CD8-positive, alpha-beta memory T cell (primary cell): ENCODE measurements at regions of chr7 and their contacts with region 1.

Region 1: GRCh38 chr7:134632937-134633540 is 13.6 kb upstream of the BPGM start:
- DNase-seq: peak in 4 of 5 donors; percentile 8 to 63 (median 51)
- H3K4me3 ChIP-seq: no peak overlapping the region
- H3K4me3 Mint-ChIP-seq: no peak overlapping the region
- H3K27ac ChIP-seq: no peak overlapping the region
- H3K27ac Mint-ChIP-seq: no peak overlapping the region
- H3K4me1 ChIP-seq: peaks cover 8% of the 10 kb centered on the region
- H3K4me1 Mint-ChIP-seq: peaks cover 11 to 21% (median 19%) of the 10 kb centered on the region in 3 donors
- H3K27me3 ChIP-seq: no peaks in the 10 kb centered on the region
- H3K27me3 Mint-ChIP-seq: peaks cover 13 to 32% of the 10 kb centered on the region in 2 donors

Region 2: DNA sequence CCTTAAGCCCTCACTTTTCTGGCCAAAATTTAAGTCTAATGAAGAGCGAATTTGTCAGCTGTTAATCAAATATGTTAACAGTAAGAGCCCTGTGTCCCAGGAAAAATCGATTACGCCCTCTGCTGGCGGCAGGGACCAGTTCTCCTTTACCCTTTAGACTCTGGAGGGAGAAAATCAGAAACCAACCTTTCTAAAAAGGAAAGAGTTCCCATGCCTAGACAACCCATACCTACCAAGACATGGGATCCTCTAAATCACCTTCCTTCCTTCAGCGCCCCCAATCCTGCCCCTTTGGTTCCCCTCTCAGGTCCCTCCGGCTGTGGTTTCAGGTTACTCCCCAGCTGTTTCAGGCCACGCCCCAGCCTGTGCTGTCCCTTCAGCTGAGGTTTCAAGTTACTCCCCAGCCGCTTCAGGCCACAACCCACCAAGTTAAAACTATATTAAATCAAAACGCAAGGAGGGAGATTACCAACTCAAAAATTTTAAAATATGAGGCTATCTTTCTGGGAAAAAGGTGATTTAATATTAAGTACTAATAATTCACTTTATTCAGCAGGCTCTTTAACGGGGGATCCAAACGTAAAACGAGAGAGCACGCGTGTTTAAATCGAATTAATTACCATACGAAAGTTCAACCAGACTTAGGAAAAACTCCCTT is 85.5 kb before region 1 on chr7:
- CTCF ChIA-PET with region 1: no interaction called
- POLR2A ChIA-PET with region 1: no interaction called
- DNase-seq: peak; percentile 34 to 73 (median 44)
- H3K4me3 ChIP-seq: no peak overlapping the region
- H3K4me3 Mint-ChIP-seq: peak overlapping the region in 2 of 7 donors; percentile 24 to 40
- H3K27ac ChIP-seq: no peak overlapping the region
- H3K27ac Mint-ChIP-seq: no peak overlapping the region
- H3K4me1 ChIP-seq: no peaks in the 10 kb centered on the region
- H3K4me1 Mint-ChIP-seq: peaks cover 0 to 3% (median 0%) of the 10 kb centered on the region in 3 donors
- H3K27me3 ChIP-seq: no peaks in the 10 kb centered on the region
- H3K27me3 Mint-ChIP-seq: peaks cover 24 to 26% of the 10 kb centered on the region in 2 donors

Region 3: GRCh38 chr7:134701272-134701671 is 68.2 kb after region 1 on chr7:
- CTCF ChIA-PET with region 1: interaction called, 81 read pairs
- POLR2A ChIA-PET with region 1: no interaction called
- DNase-seq: peak in 3 of 5 donors; percentile 13 to 51 (median 42)
- H3K4me3 ChIP-seq: no peak overlapping the region
- H3K4me3 Mint-ChIP-seq: no peak overlapping the region
- H3K27ac ChIP-seq: no peak overlapping the region
- H3K27ac Mint-ChIP-seq: peak overlapping the region in 2 of 8 donors; percentile 8 to 61
- H3K4me1 ChIP-seq: no peaks in the 10 kb centered on the region
- H3K4me1 Mint-ChIP-seq: no peaks in the 10 kb centered on the region
- H3K27me3 ChIP-seq: no peaks in the 10 kb centered on the region
- H3K27me3 Mint-ChIP-seq: peaks cover 0 to 16% of the 10 kb centered on the region in 2 donors

Region 4: DNA sequence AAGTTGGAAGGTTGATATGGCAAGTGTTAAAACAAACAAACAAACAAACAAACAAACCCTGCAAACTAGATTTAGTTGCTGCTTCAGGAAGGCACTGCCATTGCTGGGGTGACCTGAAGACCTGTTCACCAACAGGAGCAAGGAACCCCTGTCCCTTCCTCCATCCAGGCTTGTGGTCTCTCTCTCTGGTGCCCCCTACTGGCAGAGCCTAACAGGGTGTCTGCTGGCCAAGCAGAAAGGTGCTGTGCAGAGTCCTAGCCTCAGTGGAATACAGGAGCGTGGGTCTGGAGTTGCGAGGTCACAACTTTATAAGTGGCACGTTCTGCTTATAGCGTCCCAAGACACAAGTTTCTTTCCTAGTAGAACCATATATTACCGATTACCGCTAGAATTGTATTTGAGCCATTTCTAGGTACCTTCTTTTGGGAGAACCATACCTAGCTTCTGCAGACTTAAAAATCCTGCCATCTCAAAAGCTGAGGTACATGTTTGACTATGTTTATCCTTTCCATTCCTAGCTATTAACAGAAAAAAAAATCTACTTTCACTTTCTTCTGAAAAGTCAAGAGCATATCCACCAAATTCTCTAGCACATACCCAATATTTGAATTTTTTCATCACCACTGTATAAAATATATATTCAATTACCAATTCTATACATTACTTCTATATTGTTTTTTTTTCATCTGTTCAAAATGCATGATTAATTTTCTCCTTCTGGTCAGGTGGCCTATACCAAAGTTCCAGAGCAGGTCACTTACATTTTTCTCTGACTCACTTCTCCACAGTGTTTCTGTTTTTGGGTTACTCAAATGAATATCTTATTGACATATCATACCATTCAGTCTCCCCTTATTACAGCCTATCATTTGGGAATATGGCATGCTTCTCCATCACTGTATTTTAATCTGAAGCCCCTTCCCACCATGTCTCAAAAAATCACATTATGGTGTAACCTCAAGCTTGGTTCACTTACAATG is 117.3 kb after region 1 on chr7:
- CTCF ChIA-PET with region 1: interaction called, 52 read pairs
- POLR2A ChIA-PET with region 1: no interaction called
- DNase-seq: peak; percentile 33 to 75 (median 52)
- H3K4me3 ChIP-seq: no peak overlapping the region
- H3K4me3 Mint-ChIP-seq: no peak overlapping the region
- H3K27ac ChIP-seq: no peak overlapping the region
- H3K27ac Mint-ChIP-seq: no peak overlapping the region
- H3K4me1 ChIP-seq: no peaks in the 10 kb centered on the region
- H3K4me1 Mint-ChIP-seq: no peaks in the 10 kb centered on the region
- H3K27me3 ChIP-seq: no peaks in the 10 kb centered on the region
- H3K27me3 Mint-ChIP-seq: peaks cover 5 to 11% of the 10 kb centered on the region in 2 donors

Region 5: DNA sequence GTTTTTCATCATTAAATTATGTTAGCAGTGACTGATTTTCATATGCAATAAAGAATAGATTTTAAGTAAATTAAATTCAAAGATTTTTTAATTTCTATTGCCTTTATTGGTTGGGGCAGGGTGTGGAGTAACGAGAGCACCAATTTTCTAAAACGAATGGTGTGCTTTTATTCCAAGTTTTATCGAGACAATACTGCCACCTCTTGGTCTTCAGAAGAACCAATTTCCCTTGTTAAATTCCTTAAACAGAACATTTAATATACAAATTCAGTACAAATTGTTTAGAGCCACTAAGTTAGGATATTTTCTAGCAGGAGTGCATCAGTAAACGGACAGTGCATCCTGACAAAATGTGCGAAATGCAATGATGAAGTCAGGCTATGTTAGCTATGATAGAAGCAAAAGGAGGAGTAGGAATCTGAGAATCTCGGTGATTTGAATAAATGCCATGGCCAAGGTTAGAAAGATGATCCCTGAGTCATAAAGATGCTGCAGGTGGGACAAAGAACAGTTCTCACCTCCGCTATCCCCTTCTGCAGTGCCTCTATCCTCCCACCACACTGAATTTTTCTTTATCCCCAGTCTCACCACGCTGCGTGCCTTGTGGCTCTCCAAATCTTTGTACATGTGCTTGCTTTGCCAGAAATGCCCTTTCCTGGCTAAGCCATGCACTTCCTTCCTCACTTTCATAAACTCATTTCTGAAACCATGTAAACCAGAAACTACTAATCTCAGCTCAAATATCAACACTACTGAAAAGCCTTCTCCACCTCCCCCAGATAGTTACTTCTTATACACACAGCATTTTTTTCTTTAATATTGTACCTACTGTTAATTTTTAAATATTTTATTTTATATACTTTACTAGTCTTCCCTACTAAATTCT is 321.4 kb after region 1 on chr7:
- CTCF ChIA-PET with region 1: interaction called, 22 read pairs
- POLR2A ChIA-PET with region 1: no interaction called
- DNase-seq: peak in 2 of 5 donors; percentile 14 to 41
- H3K4me3 ChIP-seq: no peak overlapping the region
- H3K4me3 Mint-ChIP-seq: no peak overlapping the region
- H3K27ac ChIP-seq: no peak overlapping the region
- H3K27ac Mint-ChIP-seq: no peak overlapping the region
- H3K4me1 ChIP-seq: no peaks in the 10 kb centered on the region
- H3K4me1 Mint-ChIP-seq: no peaks in the 10 kb centered on the region
- H3K27me3 ChIP-seq: no peaks in the 10 kb centered on the region
- H3K27me3 Mint-ChIP-seq: peaks cover 4 to 5% of the 10 kb centered on the region in 2 donors